Adrenal gland (tissue), 19 donors: ENCODE measurements at regions of chr6 and their contacts with region 1.

Region 1: GRCh38 chr6:149431905-149432775 is 32.1 kb downstream of the SUMO4 start:
- DNase-seq: peak; percentile 87 to 97 (median 93)
- H3K4me3 ChIP-seq: no peak overlapping the region
- H3K27ac ChIP-seq: no peak overlapping the region
- H3K4me1 ChIP-seq: peaks cover 3 to 5% of the 10 kb centered on the region in 2 donors
- H3K27me3 ChIP-seq: no peaks in the 10 kb centered on the region
- CTCF ChIP-seq: peak; percentile 86 to 98 (median 96)
- POLR2A ChIP-seq: no peak

Region 2: GRCh38 chr6:148999929-149000468 is 432.1 kb before region 1 on chr6:
- intact Hi-C with region 1: no loop called
- DNase-seq: peak; percentile 85 to 96 (median 90)
- H3K4me3 ChIP-seq: no peak overlapping the region
- H3K27ac ChIP-seq: peak overlapping the region; percentile 65 to 87 (median 74)
- H3K4me1 ChIP-seq: peaks cover 14 to 19% of the 10 kb centered on the region in 2 donors
- H3K27me3 ChIP-seq: no peaks in the 10 kb centered on the region
- CTCF ChIP-seq: no peak
- POLR2A ChIP-seq: no peak

Region 3: DNA sequence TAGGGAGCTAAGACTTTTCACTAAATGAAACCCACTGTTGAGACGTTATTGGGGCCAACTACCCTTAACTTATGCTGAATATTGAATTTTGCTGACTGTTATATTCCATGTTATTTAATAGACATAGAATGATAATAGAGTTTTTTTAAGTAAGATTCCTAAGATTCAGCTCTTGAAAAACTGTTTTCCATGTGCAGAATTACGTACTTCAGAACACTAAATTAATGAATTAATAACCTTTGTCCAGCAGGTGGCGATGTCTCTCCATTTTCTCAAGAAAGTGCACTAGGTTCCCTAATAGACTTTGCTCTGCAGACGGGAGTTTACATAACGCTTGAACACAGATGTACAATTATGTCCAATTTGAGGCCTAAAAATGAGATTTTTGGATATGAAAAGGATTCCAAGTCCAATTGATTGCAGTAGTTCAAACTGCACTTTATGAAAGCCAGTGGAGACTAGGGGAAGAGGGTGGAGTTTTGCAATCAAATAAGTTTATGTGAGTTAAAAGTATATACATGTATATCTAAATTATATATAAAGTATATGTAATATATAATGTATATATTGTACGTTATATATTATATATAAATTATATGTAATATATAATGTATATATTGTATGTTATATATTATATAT is 403.3 kb before region 1 on chr6:
- intact Hi-C with region 1: loop called (anchors 5 kb)
- DNase-seq: peak; percentile 64 to 87 (median 80)
- H3K4me3 ChIP-seq: no peak overlapping the region
- H3K27ac ChIP-seq: no peak overlapping the region
- H3K4me1 ChIP-seq: peaks cover 24 to 35% of the 10 kb centered on the region in 2 donors
- H3K27me3 ChIP-seq: no peaks in the 10 kb centered on the region
- CTCF ChIP-seq: peak; percentile 71 to 91 (median 83)
- POLR2A ChIP-seq: no peak

Region 4: DNA sequence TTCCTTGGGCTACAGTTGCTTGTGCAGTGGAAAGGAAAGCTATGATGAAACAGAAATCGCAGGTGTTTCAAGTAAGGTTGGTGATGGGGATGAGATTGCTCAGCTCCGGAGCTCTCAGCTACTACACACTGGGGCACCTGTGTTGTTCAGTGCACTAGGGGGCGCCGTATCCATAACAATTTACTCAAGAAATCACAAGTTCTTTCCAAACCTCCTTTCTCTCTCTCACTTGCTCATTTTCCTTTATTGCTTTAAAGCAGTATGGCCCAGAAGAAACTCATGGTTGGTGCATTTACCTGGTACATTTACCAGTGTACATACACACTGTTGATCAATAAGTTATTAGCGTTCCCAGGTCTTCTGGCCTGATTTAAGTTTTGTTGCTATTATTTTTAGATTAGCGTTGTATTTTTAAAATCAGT is 349.8 kb before region 1 on chr6:
- intact Hi-C with region 1: loop called (anchors 2 to 5 kb)
- DNase-seq: peak; percentile 76 to 95 (median 86)
- H3K4me3 ChIP-seq: no peak overlapping the region
- H3K27ac ChIP-seq: no peak overlapping the region
- H3K4me1 ChIP-seq: peaks cover 0 to 16% of the 10 kb centered on the region in 2 donors
- H3K27me3 ChIP-seq: no peaks in the 10 kb centered on the region
- CTCF ChIP-seq: peak; percentile 68 to 91 (median 86)
- POLR2A ChIP-seq: no peak

Region 5: DNA sequence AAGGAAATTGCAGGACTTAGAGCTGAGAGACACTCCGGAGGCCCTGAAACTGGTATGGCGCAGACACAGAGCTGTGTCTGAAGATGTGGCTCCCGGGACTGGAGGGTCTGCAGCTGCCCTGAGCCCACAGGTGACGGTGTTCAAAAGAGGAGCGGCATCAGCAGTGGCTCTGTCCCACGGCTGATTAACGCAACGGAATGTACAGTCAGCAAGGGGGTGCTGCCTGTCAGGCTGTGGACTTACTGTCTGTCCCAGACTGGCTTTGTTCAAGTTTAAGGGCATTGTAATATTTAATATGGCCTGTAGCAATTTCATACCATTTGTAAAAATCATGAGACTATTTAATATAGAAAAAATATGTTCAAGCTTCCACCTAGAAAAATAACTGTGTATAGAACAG is 342.6 kb before region 1 on chr6:
- intact Hi-C with region 1: loop called in 1 of 2 experiments (anchors 5 kb)
- DNase-seq: no peak
- H3K4me3 ChIP-seq: no peak overlapping the region
- H3K27ac ChIP-seq: no peak overlapping the region
- H3K4me1 ChIP-seq: peaks cover 9 to 10% of the 10 kb centered on the region in 2 donors
- H3K27me3 ChIP-seq: no peaks in the 10 kb centered on the region
- CTCF ChIP-seq: no peak
- POLR2A ChIP-seq: no peak

Region 6: GRCh38 chr6:149129371-149130077 is 302.6 kb before region 1 on chr6:
- intact Hi-C with region 1: no loop called
- DNase-seq: peak in 6 of 7 donors; percentile 40 to 75 (median 55)
- H3K4me3 ChIP-seq: no peak overlapping the region
- H3K27ac ChIP-seq: no peak overlapping the region
- H3K4me1 ChIP-seq: no peaks in the 10 kb centered on the region
- H3K27me3 ChIP-seq: no peaks in the 10 kb centered on the region
- CTCF ChIP-seq: no peak
- POLR2A ChIP-seq: no peak

Region 7: GRCh38 chr6:149316798-149317655 is 115.1 kb before region 1 on chr6:
- intact Hi-C with region 1: loop called (anchors 10 kb)
- DNase-seq: peak; percentile 89 to 96 (median 92)
- H3K4me3 ChIP-seq: peak overlapping the region; percentile 62 to 98 (median 90)
- H3K27ac ChIP-seq: peak overlapping the region; percentile 70 to 99 (median 95)
- H3K4me1 ChIP-seq: peaks cover 12 to 33% of the 10 kb centered on the region in 2 donors
- H3K27me3 ChIP-seq: no peaks in the 10 kb centered on the region
- CTCF ChIP-seq: peak in 2 of 6 experiments; percentile 10 to 35
- POLR2A ChIP-seq: peak; percentile 81 to 82

Region 8: DNA sequence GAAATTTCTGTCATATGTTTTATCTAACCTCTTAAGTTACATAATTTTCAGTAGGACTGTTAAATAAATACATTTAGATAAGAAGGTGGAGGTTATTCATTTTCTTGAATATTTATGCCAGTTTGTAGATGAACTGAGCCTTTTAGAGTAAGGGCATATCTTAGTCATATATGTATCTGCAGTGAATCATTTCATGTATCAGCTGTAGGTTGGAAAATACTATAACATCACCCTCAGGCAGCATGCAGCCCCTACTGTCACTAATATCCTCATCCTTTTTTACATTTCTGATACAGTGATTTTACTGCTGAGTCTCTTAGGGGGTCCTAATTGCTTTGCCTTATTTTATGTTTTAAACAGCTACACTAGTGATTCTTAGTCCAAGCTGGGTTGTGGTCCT is 51.6 kb before region 1 on chr6:
- intact Hi-C with region 1: no loop called
- DNase-seq: no peak
- H3K4me3 ChIP-seq: no peak overlapping the region
- H3K27ac ChIP-seq: no peak overlapping the region
- H3K4me1 ChIP-seq: peaks cover 0 to 4% of the 10 kb centered on the region in 2 donors
- H3K27me3 ChIP-seq: no peaks in the 10 kb centered on the region
- CTCF ChIP-seq: no peak
- POLR2A ChIP-seq: no peak